ENCODE measurements at regions of chr7 and their contacts with region 1.

Region 1: GRCh38 chr7:39465055-39465929 is 100.9 kb upstream of the YAE1 start:
- DNase-seq: peak; percentile 66
- H3K4me3 Mint-ChIP-seq: no peak overlapping the region
- H3K27ac Mint-ChIP-seq: no peak overlapping the region
- H3K4me1 Mint-ChIP-seq: no peaks in the 10 kb centered on the region
- H3K27me3 Mint-ChIP-seq: peaks cover 81% of the 10 kb centered on the region
- CTCF ChIP-seq: peak; percentile 79

Region 2: DNA sequence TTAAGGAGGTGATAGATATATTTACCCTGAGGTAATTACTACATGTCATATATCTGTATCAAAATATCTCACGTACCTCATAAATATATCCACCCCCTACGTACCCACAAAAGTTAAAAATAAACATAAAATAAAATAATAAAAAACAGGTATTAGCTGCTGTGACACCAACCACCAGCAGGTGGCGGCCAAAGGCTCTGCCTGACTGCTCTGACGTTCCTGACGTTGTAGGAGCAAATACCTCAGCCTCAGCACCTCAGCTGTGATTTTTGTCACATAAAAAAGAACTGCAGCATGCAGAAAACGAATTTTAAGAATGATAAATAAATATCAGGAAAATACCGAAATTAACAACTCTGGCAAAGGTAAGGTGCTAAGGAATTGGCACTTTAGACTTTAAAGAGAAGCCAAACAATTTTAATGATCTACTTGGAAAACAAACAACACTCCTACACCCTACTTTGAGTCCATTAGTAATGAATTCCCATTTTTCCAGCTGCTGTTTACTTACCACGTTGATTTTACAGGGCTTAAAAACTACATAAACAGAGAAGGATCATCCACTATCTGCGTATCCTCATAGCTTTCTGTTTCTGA is 1066.5 kb before region 1 on chr7:
- CTCF ChIA-PET with region 1: interaction called, 4 read pairs
- POLR2A ChIA-PET with region 1: no interaction called
- intact Hi-C with region 1: loop called (anchors 5 kb)
- DNase-seq: peak; percentile 52
- H3K4me3 Mint-ChIP-seq: no peak overlapping the region
- H3K27ac Mint-ChIP-seq: no peak overlapping the region
- H3K4me1 Mint-ChIP-seq: no peaks in the 10 kb centered on the region
- H3K27me3 Mint-ChIP-seq: peaks cover 43% of the 10 kb centered on the region
- CTCF ChIP-seq: peak; percentile 75

Region 3: DNA sequence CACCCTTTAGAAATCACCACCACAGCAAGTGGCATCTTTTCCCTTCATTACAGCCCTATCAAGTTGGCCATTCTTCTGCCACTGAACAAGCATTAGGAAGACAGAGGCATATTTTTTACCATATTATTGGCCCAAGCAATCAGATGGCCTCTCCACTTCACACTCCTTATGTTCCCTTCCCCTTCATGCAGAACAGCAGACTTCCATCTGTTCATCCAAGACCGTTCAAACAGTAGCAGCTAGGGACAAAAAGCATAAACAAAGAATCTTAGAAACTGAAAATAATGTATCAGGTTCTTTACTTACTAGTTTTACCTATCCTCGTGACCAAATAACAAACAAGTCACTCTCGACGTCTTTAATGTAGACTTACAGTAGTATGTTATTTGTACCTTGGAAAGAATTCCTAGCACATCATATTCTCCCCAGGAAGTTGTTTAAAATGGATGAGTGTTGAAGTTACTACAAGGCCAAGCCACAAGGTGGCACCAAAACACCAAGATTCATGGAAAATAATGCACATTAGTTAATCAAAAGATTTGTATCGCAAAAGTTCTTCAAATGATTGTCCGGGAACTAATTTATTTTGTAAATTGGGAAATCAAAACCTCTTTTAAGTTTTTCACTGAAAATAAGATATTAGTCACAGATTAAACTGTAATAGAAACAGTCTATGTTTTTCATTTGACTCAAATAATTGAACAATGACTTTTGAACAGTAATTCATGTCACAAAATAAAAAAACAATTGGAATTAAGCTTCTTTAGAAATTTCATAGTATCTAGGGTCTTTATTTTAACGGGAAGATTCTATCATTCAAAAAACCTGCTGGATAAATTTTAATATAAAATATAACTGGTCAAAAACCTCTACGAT is 668.4 kb before region 1 on chr7:
- CTCF ChIA-PET with region 1: interaction called, 9 read pairs
- POLR2A ChIA-PET with region 1: no interaction called
- intact Hi-C with region 1: loop called (anchors 1 kb)
- DNase-seq: peak; percentile 64
- H3K4me3 Mint-ChIP-seq: no peak overlapping the region
- H3K27ac Mint-ChIP-seq: no peak overlapping the region
- H3K4me1 Mint-ChIP-seq: no peaks in the 10 kb centered on the region
- H3K27me3 Mint-ChIP-seq: no peaks in the 10 kb centered on the region
- CTCF ChIP-seq: peak; percentile 78

Region 4: DNA sequence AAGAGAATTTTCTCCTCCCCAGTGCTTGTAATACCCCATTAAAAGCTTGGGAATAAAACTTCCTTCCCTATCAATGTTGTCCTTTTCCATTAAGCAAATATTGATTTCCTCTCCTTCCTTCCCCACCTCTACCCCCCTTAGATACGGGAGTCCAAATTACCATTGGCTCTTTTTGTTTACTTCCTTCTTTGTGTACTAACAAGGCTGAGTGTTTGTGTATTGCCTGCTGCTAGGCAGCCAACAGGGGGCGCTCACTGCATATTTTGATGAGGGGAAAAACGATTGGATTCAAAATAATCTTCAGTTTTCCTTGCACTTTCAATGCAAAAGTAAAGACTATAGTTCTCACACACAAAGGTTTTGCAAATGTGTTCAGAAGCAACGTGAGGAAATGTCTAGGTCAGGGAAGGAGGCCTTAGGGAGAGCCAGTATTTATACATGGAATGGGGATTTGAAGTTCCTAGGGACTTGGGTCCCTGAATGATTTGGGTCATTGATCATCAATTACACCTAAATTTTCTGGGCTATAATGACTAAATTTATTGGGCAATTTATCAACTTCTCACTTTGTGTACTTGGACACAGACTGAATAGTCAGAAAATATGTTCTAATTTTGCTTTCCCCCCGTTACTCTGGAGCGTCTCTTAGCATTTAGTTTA is 532.7 kb before region 1 on chr7:
- CTCF ChIA-PET with region 1: interaction called, 7 read pairs
- POLR2A ChIA-PET with region 1: no interaction called
- intact Hi-C with region 1: loop called (anchors 1 kb)
- DNase-seq: peak; percentile 65
- H3K4me3 Mint-ChIP-seq: no peak overlapping the region
- H3K27ac Mint-ChIP-seq: no peak overlapping the region
- H3K4me1 Mint-ChIP-seq: peaks cover 7% of the 10 kb centered on the region
- H3K27me3 Mint-ChIP-seq: peaks cover 57% of the 10 kb centered on the region
- CTCF ChIP-seq: peak; percentile 82

Region 5: DNA sequence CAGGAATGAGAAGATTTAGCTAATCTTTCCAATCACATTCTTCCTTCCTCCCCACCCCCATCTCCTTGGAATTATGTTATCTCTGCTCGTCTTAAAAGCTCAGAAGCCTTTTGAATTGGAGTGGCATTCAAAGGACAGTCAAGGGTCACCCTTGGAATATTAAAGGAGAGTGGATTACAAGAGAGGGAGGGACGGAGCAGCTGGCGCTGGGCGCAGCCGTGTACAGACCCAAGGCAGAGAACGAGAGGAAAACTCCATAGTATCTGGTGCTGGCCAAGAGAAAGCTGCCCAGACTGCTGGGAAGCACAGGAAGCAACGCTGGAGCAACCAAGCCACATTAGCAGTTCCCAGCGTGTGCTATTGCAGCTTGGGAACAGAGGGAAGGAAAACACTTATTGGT is 391.9 kb before region 1 on chr7:
- CTCF ChIA-PET with region 1: interaction called, 8 read pairs
- POLR2A ChIA-PET with region 1: no interaction called
- intact Hi-C with region 1: loop called (anchors 5 kb)
- DNase-seq: no peak
- H3K4me3 Mint-ChIP-seq: no peak overlapping the region
- H3K27ac Mint-ChIP-seq: no peak overlapping the region
- H3K4me1 Mint-ChIP-seq: no peaks in the 10 kb centered on the region
- H3K27me3 Mint-ChIP-seq: peaks cover 86% of the 10 kb centered on the region
- CTCF ChIP-seq: no peak

Region 6: GRCh38 chr7:39453743-39454355 is 11.4 kb before region 1 on chr7:
- CTCF ChIA-PET with region 1: interaction called, 23 read pairs
- POLR2A ChIA-PET with region 1: interaction called, 4 read pairs
- intact Hi-C with region 1: no loop called
- DNase-seq: peak; percentile 74
- H3K4me3 Mint-ChIP-seq: no peak overlapping the region
- H3K27ac Mint-ChIP-seq: no peak overlapping the region
- H3K4me1 Mint-ChIP-seq: no peaks in the 10 kb centered on the region
- H3K27me3 Mint-ChIP-seq: peaks cover 61% of the 10 kb centered on the region
- CTCF ChIP-seq: peak; percentile 54

Measured in MCF 10A (cell line).